Panc1 (cell line): ENCODE measurements at regions of chr6 and their contacts with region 1.

Region 1: DNA sequence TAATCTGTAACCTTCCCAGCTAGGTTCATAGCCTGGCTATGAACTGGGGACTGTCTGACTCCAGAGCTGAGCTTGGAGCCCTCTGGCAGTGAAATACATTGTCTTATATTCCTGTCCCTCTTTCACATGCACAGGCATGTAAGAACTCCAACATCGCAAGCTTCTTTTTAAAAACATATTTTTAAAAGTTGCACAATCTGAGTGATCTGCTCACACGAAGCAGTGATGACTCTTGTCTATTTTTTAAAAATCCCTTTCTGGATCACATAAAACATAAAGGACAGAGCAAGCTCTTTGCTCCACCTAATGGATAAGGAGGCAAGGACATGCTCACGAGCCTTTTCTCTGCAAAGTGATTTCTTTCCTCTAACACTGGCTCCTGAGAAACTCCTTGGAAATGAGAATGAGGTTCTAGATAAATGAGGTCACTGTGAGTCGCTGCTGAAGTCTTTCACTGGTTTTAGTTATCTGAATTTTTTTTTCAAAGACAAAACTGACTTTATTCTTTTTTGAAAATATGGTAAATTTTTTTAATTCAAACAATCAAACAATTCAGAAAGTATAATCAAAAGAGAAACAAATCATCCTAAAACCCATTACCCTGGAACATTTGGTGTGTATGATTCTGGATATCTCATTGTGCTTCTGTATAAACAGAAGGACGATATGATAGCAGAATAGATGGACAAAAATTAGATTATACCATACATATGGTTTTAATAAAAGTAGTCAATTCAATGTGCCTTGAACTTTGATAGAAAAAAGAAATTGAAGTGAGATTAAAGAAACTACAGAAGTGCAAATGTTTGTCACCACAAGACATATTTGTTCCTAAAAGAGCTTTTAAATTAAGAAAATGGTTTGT is 30.8 kb downstream of the IL20RA start:
- DNase-seq: peak; percentile 15
- ATAC-seq: peak; percentile 83
- H3K4me3 ChIP-seq: no peak overlapping the region
- H3K27ac ChIP-seq: no peak overlapping the region
- H3K4me1 ChIP-seq: no peaks in the 10 kb centered on the region
- H3K27me3 ChIP-seq: no peaks in the 10 kb centered on the region; the same call in 1 of the 2 replicates
- CTCF ChIP-seq: peak; percentile 77

Region 2: GRCh38 chr6:136967876-136968752 is 45.9 kb before region 1 on chr6:
- CTCF ChIA-PET with region 1: no interaction called
- POLR2A ChIA-PET with region 1: no interaction called
- in situ Hi-C with region 1: no loop called
- intact Hi-C with region 1: loop called (anchors 5 kb)
- DNase-seq: peak; percentile 51
- ATAC-seq: peak; percentile 95
- H3K4me3 ChIP-seq: no peak overlapping the region
- H3K27ac ChIP-seq: no peak overlapping the region
- H3K4me1 ChIP-seq: no peaks in the 10 kb centered on the region
- H3K27me3 ChIP-seq: no peaks in the 10 kb centered on the region
- CTCF ChIP-seq: peak; percentile 88